GM13976 (cell line): ENCODE measurements at regions of chr6 and their contacts with region 1.

Region 1: GRCh38 chr6:3013479-3013878 is 13.8 kb downstream of the NQO2 start:
- DNase-seq: no peak
- CTCF ChIP-seq: no peak

Region 2: GRCh38 chr6:3045369-3045768 is 31.9 kb after region 1 on chr6:
- in situ Hi-C with region 1: loop called (anchors 5 kb)
- DNase-seq: no peak
- CTCF ChIP-seq: no peak